ENCODE measurements at regions of chr16 and their contacts with region 1.

Region 1: DNA sequence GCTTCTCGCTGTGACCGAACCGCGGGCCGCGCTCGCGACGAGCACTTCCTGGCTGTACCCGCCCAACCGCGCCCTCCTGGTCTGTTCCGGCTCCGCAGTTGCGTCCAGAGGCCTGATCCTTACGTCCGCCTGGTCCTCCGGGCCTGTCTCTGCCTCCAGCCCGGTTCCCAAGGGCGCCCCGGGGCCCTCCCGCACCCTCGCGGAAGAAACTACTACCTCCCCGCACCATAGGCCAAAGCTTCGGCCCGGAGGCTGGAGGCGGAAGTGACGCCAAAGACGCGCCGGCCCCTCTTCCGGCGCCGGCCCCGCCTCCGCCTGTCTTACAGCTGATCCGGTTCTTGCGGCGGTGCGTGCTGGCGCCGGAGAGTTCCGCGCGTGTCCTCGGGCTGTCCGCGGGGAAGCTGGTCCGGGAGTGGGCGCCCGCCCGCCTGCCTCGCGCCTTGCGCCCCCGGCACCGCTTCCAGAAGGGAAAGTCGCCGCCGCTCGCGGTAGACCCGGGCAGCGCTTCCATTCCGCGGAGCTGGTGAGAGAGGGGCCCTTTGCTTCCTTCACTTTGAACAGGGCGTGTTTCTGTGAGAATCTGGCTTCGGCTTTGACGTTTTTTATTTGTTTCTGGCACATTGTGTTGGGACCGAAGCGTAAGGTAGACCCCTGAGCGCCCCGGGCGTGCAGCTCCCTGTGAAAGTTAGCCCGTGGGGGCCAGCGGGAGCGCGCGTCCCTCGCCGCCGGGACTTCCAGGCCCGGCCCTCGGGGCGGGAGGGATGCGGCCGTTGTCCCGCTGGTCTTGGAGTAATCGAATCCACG is at the start of gene ZNF778:
- DNase-seq: peak; percentile 86
- H3K4me3 ChIP-seq: peak within 1 kb of the TSS; percentile 99
- H3K27ac ChIP-seq: peak within 1 kb of the TSS; percentile 63
- H3K4me1 ChIP-seq: peaks cover 5% of the 10 kb centered on the region
- CTCF ChIP-seq: no peak
- total RNA-seq, gene ZNF778: 8.6 and 9.9 TPM in 2 replicates

Region 2: GRCh38 chr16:88737298-88738150 is 480.1 kb before region 1 on chr16:
- CTCF ChIA-PET with region 1: no interaction called
- POLR2A ChIA-PET with region 1: no interaction called
- intact Hi-C with region 1: loop called (anchors 5 kb)
- DNase-seq: peak; percentile 82
- H3K4me3 ChIP-seq: no peak overlapping the region
- H3K27ac ChIP-seq: no peak overlapping the region
- H3K4me1 ChIP-seq: peaks cover 18% of the 10 kb centered on the region
- CTCF ChIP-seq: peak; percentile 94

Region 3: GRCh38 chr16:89115216-89115861 is 102.3 kb before region 1 on chr16:
- CTCF ChIA-PET with region 1: no interaction called
- POLR2A ChIA-PET with region 1: no interaction called
- intact Hi-C with region 1: no loop called
- DNase-seq: peak; percentile 91
- H3K4me3 ChIP-seq: peak overlapping the region; percentile 61
- H3K27ac ChIP-seq: peak overlapping the region; percentile 95
- H3K4me1 ChIP-seq: peaks cover 45% of the 10 kb centered on the region
- CTCF ChIP-seq: no peak

Region 4: DNA sequence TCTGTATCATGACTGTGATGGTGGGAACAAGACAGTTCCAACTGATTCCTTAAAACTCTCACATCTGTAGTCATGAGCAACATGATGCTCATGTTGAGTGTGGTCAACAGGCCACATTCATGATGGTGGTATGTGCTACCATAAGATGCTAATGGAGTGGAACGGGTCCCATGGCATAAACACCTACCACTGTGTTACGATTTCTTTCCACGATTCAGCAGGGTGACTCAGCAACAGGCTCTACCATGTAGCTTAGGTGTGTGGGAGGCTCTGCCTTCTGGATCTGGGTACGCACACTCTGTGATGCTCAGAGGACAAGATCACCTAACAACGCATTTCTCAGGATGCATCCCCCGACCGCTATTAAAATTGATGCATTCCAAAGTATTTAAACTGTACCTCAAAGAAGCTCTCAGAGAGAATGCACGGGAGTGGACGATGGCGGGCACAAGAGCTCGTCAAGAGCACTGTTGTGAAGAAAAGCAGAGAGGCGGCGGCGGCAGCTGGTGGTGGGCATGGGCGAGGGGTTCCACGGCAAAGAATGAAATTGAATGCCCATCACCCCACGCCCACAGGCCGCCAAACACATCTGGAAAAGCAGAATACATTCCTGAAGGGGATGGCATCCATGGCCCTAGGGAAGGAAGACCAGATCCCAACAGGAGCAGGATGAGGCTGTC is 133.3 kb after region 1 on chr16:
- CTCF ChIA-PET with region 1: no interaction called
- POLR2A ChIA-PET with region 1: no interaction called
- intact Hi-C with region 1: no loop called
- DNase-seq: no peak
- H3K4me3 ChIP-seq: no peak overlapping the region
- H3K27ac ChIP-seq: no peak overlapping the region
- H3K4me1 ChIP-seq: peaks cover 32% of the 10 kb centered on the region
- CTCF ChIP-seq: no peak